ENCODE measurements at regions of chr16 and their contacts with region 1.

Region 1: GRCh38 chr16:17416461-17417311 is 54.1 kb downstream of the XYLT1 start:
- DNase-seq: peak in 1 of 2 donors; percentile 72
- H3K4me3 ChIP-seq: peak overlapping the region in 1 of 4 donors; percentile 10
- H3K27ac ChIP-seq: peak overlapping the region in 4 of 5 donors; percentile 24 to 63 (median 38)
- H3K4me1 ChIP-seq: peaks cover 13 to 29% (median 18%) of the 10 kb centered on the region in 4 donors
- H3K27me3 ChIP-seq: no peaks in the 10 kb centered on the region
- CTCF ChIP-seq: no peak
- EP300 ChIP-seq: no peak
- POLR2A ChIP-seq: no peak

Region 2: GRCh38 chr16:17467923-17468540 is 51.3 kb after region 1 on chr16:
- intact Hi-C with region 1: loop called (anchors 10 kb)
- DNase-seq: peak; percentile 67 to 91
- H3K4me3 ChIP-seq: peak overlapping the region; percentile 66 to 97 (median 76)
- H3K27ac ChIP-seq: peak overlapping the region in 1 of 5 donors; percentile 91
- H3K4me1 ChIP-seq: peaks cover 19 to 58% (median 38%) of the 10 kb centered on the region in 4 donors
- H3K27me3 ChIP-seq: peaks cover 0 to 17% (median 0%) of the 10 kb centered on the region in 3 donors
- CTCF ChIP-seq: peak in 5 of 7 experiments; percentile 56 to 72 (median 59)
- EP300 ChIP-seq: no peak
- POLR2A ChIP-seq: no peak

Measured in stomach (tissue), 19 donors.